A549 (cell line): ENCODE measurements at regions of chr3 and their contacts with region 1.

Region 1: GRCh38 chr3:185552358-185552877 is at the start of gene LIPH:
- DNase-seq: peak; percentile 48 to 88
- ATAC-seq: peak; percentile 83 to 93; a peak in 5 of 6 replicates
- H3K4me3 ChIP-seq: peak within 1 kb of the TSS; percentile 52
- H3K27ac ChIP-seq: peak within 1 kb of the TSS; percentile 86 to 87
- H3K4me1 ChIP-seq: peaks cover 42% of the 10 kb centered on the region
- CTCF ChIP-seq: no peak
- EP300 ChIP-seq: no peak
- POLR2A ChIP-seq: no peak
- RAD21 ChIP-seq: no peak
- polyA plus RNA-seq, gene LIPH: 34.9 and 38.9 TPM in 2 replicates

Region 2: DNA sequence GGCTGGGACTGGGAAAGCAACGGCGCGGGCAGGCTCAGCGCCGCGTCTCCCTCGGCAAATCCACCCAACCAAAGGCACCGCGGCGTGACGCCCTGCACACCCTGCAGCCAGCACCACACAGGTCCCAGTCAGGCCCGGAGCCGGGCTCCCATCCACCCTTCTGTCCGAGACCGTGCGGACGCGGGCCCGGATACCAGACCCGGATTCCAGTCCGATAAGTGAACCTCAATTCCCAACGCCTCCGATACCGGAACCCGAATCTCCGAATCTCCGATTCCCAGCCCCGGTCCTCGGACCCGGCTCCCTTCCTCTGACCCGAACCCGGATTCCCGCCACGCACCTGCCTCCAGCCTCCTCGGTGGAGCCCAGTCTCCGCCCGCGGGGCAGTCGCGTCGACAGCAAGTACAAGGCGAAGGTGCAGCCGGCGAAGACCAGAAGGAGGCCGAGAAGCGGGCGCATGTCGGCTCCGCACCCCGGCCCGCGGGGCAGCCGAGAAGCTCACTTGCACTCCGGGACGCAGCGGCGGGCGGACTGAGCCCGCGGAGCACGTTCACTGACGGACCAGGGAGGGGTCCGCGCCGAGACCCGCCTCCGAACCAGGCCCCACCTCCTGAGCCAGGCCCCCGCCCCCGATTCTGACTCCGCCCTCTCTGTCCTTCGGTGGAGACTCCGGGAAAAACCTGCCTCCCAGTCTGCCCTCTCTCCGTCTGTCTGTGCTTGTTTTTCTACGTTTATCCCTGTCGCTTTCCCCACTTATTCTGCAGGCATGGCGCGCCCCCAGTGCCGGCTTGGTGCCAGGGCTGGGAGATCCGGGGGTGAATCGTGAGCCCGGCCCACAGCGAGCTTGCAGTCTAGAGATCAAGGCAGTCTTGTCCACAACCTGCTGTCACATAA is 53.7 kb before region 1 on chr3 and contains the start of gene TMEM41A:
- CTCF ChIA-PET with region 1: interaction called, 3 read pairs
- POLR2A ChIA-PET with region 1: interaction called, 10 read pairs
- DNase-seq: peak; percentile 80 to 88
- ATAC-seq: peak; percentile 97
- H3K4me3 ChIP-seq: peak within 1 kb of the TSS; percentile 87
- H3K27ac ChIP-seq: peak within 1 kb of the TSS; percentile 85 to 98
- H3K4me1 ChIP-seq: peaks cover 4% of the 10 kb centered on the region; the same call in 1 of the 3 replicates
- CTCF ChIP-seq: 0 out of 3 replicates have a peak, but pooled peaks have one; percentile 2
- EP300 ChIP-seq: no peak
- POLR2A ChIP-seq: peak; percentile 76
- RAD21 ChIP-seq: peak in 1 of 2 experiments; percentile 28; a peak in 2 of 5 replicates
- polyA plus RNA-seq, gene TMEM41A: 31.3 and 36.3 TPM in 2 replicates

Region 3: DNA sequence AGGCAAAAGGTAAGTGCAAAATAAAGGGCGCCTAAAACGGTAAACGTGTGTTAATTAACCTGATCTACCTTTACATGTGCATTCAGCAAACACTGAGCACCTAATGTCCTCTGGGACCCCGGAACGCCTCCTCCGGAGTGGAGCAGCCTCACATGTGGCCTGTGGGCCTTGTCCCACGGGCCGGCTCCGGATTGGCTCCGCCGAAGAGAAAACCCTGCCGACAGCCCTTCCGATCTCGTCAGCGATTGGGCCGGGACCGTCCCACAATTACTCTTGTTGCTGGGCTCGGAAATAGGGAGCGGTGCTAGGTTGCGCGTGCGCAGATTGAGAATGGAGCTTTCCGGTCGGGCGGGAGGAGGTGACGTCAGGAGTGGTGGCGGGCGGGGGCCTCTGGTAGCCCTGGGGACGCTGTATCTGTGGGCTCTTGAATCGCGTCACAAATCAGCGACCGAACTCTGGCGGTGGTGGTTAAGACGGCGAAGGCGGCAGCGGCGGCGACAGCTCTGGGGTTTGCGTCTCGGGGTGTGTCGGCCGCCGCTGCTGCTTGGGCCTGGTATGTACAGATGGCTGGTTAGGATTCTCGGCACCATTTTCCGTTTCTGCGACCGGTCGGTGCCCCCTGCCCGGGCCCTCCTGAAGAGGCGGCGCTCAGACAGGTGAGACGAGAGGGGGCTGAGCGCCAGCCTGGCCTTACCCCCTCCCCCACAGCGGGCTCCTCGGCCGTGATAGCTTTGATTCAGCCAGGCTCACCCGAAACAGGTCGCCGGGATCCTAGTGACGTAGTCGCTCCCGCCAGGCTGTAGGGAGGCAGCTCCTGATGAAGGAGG is 33.7 kb after region 1 on chr3 and contains the start of gene SENP2:
- CTCF ChIA-PET with region 1: no interaction called
- POLR2A ChIA-PET with region 1: interaction called, 11 read pairs
- DNase-seq: peak; percentile 90 to 98
- ATAC-seq: peak; percentile 99
- H3K4me3 ChIP-seq: peak within 1 kb of the TSS; percentile 80
- H3K27ac ChIP-seq: peak within 1 kb of the TSS; percentile 81 to 91
- H3K4me1 ChIP-seq: peaks cover 6% of the 10 kb centered on the region; the same call in 1 of the 3 replicates
- CTCF ChIP-seq: no peak
- EP300 ChIP-seq: no peak
- POLR2A ChIP-seq: peak; percentile 35
- RAD21 ChIP-seq: no peak
- polyA plus RNA-seq, gene SENP2: 16.3 and 22.4 TPM in 2 replicates

Region 4: DNA sequence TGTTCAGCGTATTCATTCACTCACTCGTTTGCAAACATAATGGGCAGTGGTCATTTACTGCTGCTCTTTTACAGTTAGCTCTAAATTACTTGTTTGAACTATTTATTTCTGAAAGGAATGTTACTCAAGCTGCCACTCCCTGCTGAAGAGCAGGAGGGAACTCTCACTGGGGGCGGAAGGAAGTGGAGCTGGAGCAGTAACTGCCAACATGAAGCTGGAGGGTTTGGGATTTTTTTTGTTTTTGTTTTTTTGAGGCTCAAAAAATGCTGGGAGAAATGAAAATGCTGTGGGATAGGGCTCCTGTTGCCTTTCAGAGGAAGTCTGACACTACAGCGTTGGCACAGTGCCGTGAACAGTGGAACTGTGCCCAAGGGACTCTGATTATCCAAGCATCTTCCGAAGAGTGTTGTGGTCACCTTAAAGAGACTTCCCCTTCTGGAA is 77.8 kb after region 1 on chr3:
- CTCF ChIA-PET with region 1: no interaction called
- POLR2A ChIA-PET with region 1: no interaction called
- DNase-seq: peak in 1 of 2 experiments; percentile 25
- ATAC-seq: peak; percentile 50 to 67; a peak in 3 of 6 replicates
- H3K4me3 ChIP-seq: no peak overlapping the region
- H3K27ac ChIP-seq: no peak overlapping the region; a peak in 1 of 6 replicates
- H3K4me1 ChIP-seq: peaks cover 11% of the 10 kb centered on the region; the same call in 2 of the 3 replicates
- CTCF ChIP-seq: no peak
- EP300 ChIP-seq: no peak
- POLR2A ChIP-seq: no peak
- RAD21 ChIP-seq: no peak